Naive thymus-derived CD4-positive, alpha-beta T cell (primary cell): ENCODE measurements at regions of chr19 and their contacts with region 1.

Region 1: GRCh38 chr19:8832132-8833021 is at the starts of genes MBD3L1 and ZNF558:
- DNase-seq: peak; percentile 99 to 100 (median 99)
- ATAC-seq: peak; percentile 92
- H3K4me3 ChIP-seq: peak within 1 kb of the TSS; percentile 79
- H3K4me3 Mint-ChIP-seq: peak within 1 kb of the TSS; percentile 86 to 98 (median 90)
- H3K27ac ChIP-seq: peak within 1 kb of the TSS; percentile 93
- H3K27ac Mint-ChIP-seq: peak within 1 kb of the TSS; percentile 93 to 99 (median 96)
- H3K4me1 ChIP-seq: peaks cover 9 to 11% of the 10 kb centered on the region in 2 donors
- H3K4me1 Mint-ChIP-seq: peaks cover 6 to 38% (median 24%) of the 10 kb centered on the region in 7 donors
- H3K27me3 ChIP-seq: no peaks in the 10 kb centered on the region
- H3K27me3 Mint-ChIP-seq: peaks cover 0 to 16% (median 0%) of the 10 kb centered on the region in 5 donors
- total RNA-seq, gene MBD3L1: not detected
- total RNA-seq, gene ZNF558: 18.7 to 44.9 (median 26.3) TPM

Region 2: GRCh38 chr19:8641908-8642547 is 190.3 kb before region 1 on chr19:
- CTCF ChIA-PET with region 1: no interaction called
- POLR2A ChIA-PET with region 1: no interaction called
- intact Hi-C with region 1: no loop called
- DNase-seq: peak in 7 of 9 donors; percentile 28 to 67 (median 51)
- ATAC-seq: peak; percentile 56
- H3K4me3 ChIP-seq: no peak overlapping the region
- H3K4me3 Mint-ChIP-seq: peak overlapping the region in 1 of 10 donors; percentile 18
- H3K27ac ChIP-seq: no peak overlapping the region
- H3K27ac Mint-ChIP-seq: peak overlapping the region in 1 of 9 donors; percentile 62
- H3K4me1 ChIP-seq: no peaks in the 10 kb centered on the region
- H3K4me1 Mint-ChIP-seq: peaks cover 5 to 16% (median 7%) of the 10 kb centered on the region in 7 donors
- H3K27me3 ChIP-seq: no peaks in the 10 kb centered on the region
- H3K27me3 Mint-ChIP-seq: peaks cover 12 to 32% (median 15%) of the 10 kb centered on the region in 5 donors

Region 3: GRCh38 chr19:8654591-8655339 is 177.6 kb before region 1 on chr19:
- CTCF ChIA-PET with region 1: no interaction called
- POLR2A ChIA-PET with region 1: no interaction called
- intact Hi-C with region 1: loop called in 1 of 2 experiments (anchors 2 kb)
- DNase-seq: peak; percentile 28 to 74 (median 66)
- ATAC-seq: peak; percentile 91
- H3K4me3 ChIP-seq: peak overlapping the region; percentile 11
- H3K4me3 Mint-ChIP-seq: peak overlapping the region; percentile 46 to 78 (median 69)
- H3K27ac ChIP-seq: no peak overlapping the region
- H3K27ac Mint-ChIP-seq: peak overlapping the region in 2 of 9 donors; percentile 30 to 46
- H3K4me1 ChIP-seq: peaks cover 4 to 6% of the 10 kb centered on the region in 2 donors
- H3K4me1 Mint-ChIP-seq: peaks cover 7 to 20% (median 14%) of the 10 kb centered on the region in 7 donors
- H3K27me3 ChIP-seq: no peaks in the 10 kb centered on the region
- H3K27me3 Mint-ChIP-seq: peaks cover 0 to 14% (median 5%) of the 10 kb centered on the region in 5 donors

Region 4: GRCh38 chr19:9309139-9309973 is 477.0 kb after region 1 on chr19 and contains the start of gene ZNF699:
- CTCF ChIA-PET with region 1: no interaction called
- POLR2A ChIA-PET with region 1: no interaction called
- intact Hi-C with region 1: loop called in 1 of 2 experiments (anchors 2 kb)
- DNase-seq: peak; percentile 94 to 100 (median 97)
- ATAC-seq: peak; percentile 94
- H3K4me3 ChIP-seq: peak within 1 kb of the TSS; percentile 95
- H3K4me3 Mint-ChIP-seq: peak within 1 kb of the TSS; percentile 89 to 98 (median 96)
- H3K27ac ChIP-seq: peak within 1 kb of the TSS; percentile 98
- H3K27ac Mint-ChIP-seq: peak within 1 kb of the TSS; percentile 89 to 99 (median 97)
- H3K4me1 ChIP-seq: peaks cover 6 to 15% of the 10 kb centered on the region in 2 donors
- H3K4me1 Mint-ChIP-seq: peaks cover 4 to 37% (median 24%) of the 10 kb centered on the region in 7 donors
- H3K27me3 ChIP-seq: no peaks in the 10 kb centered on the region
- H3K27me3 Mint-ChIP-seq: peaks cover 0 to 2% (median 0%) of the 10 kb centered on the region in 5 donors
- total RNA-seq, gene ZNF699: 9.1 to 19.1 (median 15.5) TPM

Region 5: DNA sequence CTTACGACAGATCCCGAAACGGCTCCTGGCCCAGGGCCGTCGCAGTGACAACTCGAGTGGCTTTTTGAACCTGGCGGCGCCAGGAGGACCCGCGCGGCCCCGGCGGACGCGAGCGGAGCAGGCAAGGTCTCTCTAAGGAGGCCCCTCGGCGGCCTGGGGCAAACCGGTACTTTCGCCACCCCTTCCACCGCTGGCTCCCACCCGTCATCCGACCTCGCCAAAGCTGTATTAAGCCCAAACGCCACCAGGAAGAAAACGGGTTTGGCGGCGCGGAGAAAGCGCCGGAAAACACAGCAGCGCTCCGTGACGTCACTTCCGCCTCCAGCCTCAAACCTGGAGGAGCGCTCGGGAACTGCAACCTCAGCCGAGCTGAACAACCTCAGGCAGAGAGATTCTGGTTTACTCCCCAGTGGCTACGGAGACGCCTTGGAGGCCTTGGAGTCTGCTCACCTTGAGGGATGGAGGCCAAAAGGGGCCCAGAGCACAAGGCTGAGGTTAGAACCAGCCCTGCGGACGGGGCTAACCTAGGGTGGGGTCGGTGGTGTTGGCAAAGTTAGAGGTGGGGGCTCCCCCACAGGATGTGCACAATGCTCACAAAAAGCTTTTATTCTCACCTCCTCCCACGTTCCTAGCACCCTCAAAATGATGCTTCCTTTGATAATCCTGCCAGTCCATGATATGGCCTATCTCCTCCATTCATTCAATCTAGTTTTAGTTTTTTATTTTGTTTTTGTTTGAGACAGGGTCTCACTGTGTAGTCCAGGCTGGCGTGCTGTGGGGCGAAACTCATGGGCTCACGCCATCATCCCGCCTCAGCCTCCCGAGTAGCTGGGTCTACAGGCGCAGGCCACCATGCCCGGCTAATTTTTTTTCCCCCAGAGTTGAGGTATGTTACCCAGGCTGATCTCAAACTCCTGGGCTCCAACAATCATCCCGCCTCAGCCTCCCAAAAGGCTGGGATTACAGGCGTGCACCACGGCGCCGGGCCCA is 603.2 kb after region 1 on chr19 and contains the start of gene ZNF266:
- CTCF ChIA-PET with region 1: no interaction called
- POLR2A ChIA-PET with region 1: interaction called, 3 read pairs
- intact Hi-C with region 1: loop called in 1 of 2 experiments (anchors 5 kb)
- DNase-seq: peak; percentile 82 to 93 (median 91)
- ATAC-seq: peak; percentile 92
- H3K4me3 ChIP-seq: peak within 1 kb of the TSS; percentile 73
- H3K4me3 Mint-ChIP-seq: peak within 1 kb of the TSS; percentile 89 to 97 (median 93)
- H3K27ac ChIP-seq: peak within 1 kb of the TSS; percentile 94
- H3K27ac Mint-ChIP-seq: peak within 1 kb of the TSS; percentile 95 to 99 (median 98)
- H3K4me1 ChIP-seq: peaks cover 26 to 27% of the 10 kb centered on the region in 2 donors
- H3K4me1 Mint-ChIP-seq: peaks cover 20 to 54% (median 48%) of the 10 kb centered on the region in 7 donors
- H3K27me3 ChIP-seq: no peaks in the 10 kb centered on the region
- H3K27me3 Mint-ChIP-seq: no peaks in the 10 kb centered on the region
- total RNA-seq, gene ZNF266: 34.0 to 73.9 (median 55.0) TPM

Region 6: DNA sequence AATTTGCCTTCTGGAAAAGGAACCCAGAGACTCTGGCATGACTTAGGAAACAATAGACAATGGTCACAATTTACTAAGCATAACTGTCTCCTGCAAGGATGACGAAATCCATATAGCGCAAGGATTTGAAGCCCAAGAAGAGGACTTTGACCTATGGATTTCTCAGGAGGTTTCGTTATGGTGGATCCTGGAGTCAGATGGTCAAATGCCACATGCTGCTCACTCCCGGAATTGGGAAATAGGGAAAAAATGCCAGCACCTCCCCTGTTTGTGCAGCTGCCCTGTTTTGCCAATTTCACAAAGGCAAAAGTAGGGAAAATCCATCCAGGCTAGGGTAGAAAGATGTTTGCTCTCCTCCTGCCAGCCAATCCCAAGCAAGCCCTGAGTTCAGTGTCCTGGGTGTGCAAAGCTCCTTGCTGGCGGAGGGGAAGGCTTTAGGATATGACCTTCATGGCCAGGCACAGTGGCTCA is 1204.3 kb after region 1 on chr19:
- CTCF ChIA-PET with region 1: no interaction called
- POLR2A ChIA-PET with region 1: no interaction called
- intact Hi-C with region 1: no loop called
- DNase-seq: no peak
- ATAC-seq: no peak
- H3K4me3 ChIP-seq: no peak overlapping the region
- H3K4me3 Mint-ChIP-seq: no peak overlapping the region
- H3K27ac ChIP-seq: no peak overlapping the region
- H3K27ac Mint-ChIP-seq: no peak overlapping the region
- H3K4me1 ChIP-seq: no peaks in the 10 kb centered on the region
- H3K4me1 Mint-ChIP-seq: no peaks in the 10 kb centered on the region
- H3K27me3 ChIP-seq: peaks cover 0 to 5% of the 10 kb centered on the region in 2 donors
- H3K27me3 Mint-ChIP-seq: peaks cover 18 to 43% (median 31%) of the 10 kb centered on the region in 5 donors